CD4-positive, alpha-beta memory T cell (primary cell): ENCODE measurements at regions of chr1 and their contacts with region 1.

Region 1: DNA sequence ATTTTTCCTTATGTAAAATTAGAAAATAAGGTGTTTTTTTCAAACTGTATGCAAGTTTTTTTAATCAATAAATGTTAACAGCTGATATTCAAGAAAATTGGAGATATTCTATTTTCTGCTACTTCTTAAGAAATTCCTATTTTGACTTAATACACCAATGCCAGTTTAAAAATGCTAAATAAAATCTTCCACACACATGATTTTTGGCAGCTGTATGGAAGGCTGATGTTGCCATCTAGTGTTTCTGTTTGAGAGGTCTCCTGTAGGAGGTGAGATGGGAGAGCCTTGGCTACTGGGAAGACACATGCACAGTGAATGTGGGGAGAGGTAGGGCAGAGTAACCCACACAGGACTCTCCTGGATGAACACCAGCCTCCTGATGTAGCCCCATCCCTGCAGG is 29.2 kb upstream of the OR2B11 start:
- DNase-seq: peak in 4 of 5 donors; percentile 47 to 56 (median 54)
- H3K4me3 ChIP-seq: no peak overlapping the region
- H3K4me3 Mint-ChIP-seq: no peak overlapping the region
- H3K27ac ChIP-seq: no peak overlapping the region
- H3K27ac Mint-ChIP-seq: no peak overlapping the region
- H3K4me1 ChIP-seq: no peaks in the 10 kb centered on the region
- H3K4me1 Mint-ChIP-seq: no peaks in the 10 kb centered on the region
- H3K27me3 ChIP-seq: no peaks in the 10 kb centered on the region
- H3K27me3 Mint-ChIP-seq: peaks cover 7 to 10% of the 10 kb centered on the region in 2 donors

Region 2: GRCh38 chr1:247415423-247416361 is 71.4 kb before region 1 on chr1 and contains the start of gene NLRP3:
- CTCF ChIA-PET with region 1: interaction called, 20 read pairs
- POLR2A ChIA-PET with region 1: no interaction called
- intact Hi-C with region 1: no loop called
- DNase-seq: peak; percentile 43 to 72 (median 60)
- H3K4me3 ChIP-seq: peak within 1 kb of the TSS; percentile 64 to 70
- H3K4me3 Mint-ChIP-seq: peak within 1 kb of the TSS; percentile 90 to 98 (median 93)
- H3K27ac ChIP-seq: peak within 1 kb of the TSS; percentile 64
- H3K27ac Mint-ChIP-seq: peak within 1 kb of the TSS; percentile 85 to 95 (median 92)
- H3K4me1 ChIP-seq: peaks cover 53% of the 10 kb centered on the region
- H3K4me1 Mint-ChIP-seq: peaks cover 39 to 61% (median 46%) of the 10 kb centered on the region in 4 donors
- H3K27me3 ChIP-seq: no peaks in the 10 kb centered on the region
- H3K27me3 Mint-ChIP-seq: no peaks in the 10 kb centered on the region
- total RNA-seq, gene NLRP3: 13.8 to 14.6 TPM

Region 3: GRCh38 chr1:247500865-247501264 is 13.8 kb after region 1 on chr1:
- CTCF ChIA-PET with region 1: no interaction called
- POLR2A ChIA-PET with region 1: no interaction called
- intact Hi-C with region 1: no loop called
- DNase-seq: no peak
- H3K4me3 ChIP-seq: no peak overlapping the region
- H3K4me3 Mint-ChIP-seq: no peak overlapping the region
- H3K27ac ChIP-seq: no peak overlapping the region
- H3K27ac Mint-ChIP-seq: no peak overlapping the region
- H3K4me1 ChIP-seq: no peaks in the 10 kb centered on the region
- H3K4me1 Mint-ChIP-seq: no peaks in the 10 kb centered on the region
- H3K27me3 ChIP-seq: no peaks in the 10 kb centered on the region
- H3K27me3 Mint-ChIP-seq: peaks cover 6 to 10% of the 10 kb centered on the region in 2 donors